GM10248 (cell line): ENCODE measurements at regions of chr10 and their contacts with region 1.

Region 1: GRCh38 chr10:93977442-93977841 is 16.3 kb upstream of the PLCE1 start:
- DNase-seq: no peak
- CTCF ChIP-seq: no peak

Region 2: GRCh38 chr10:93993782-93994437 is 16.5 kb after region 1 on chr10 and contains the start of gene PLCE1:
- CTCF ChIA-PET with region 1: interaction called, 21 read pairs
- POLR2A ChIA-PET with region 1: no interaction called
- DNase-seq: peak; percentile 60
- CTCF ChIP-seq: no peak

Region 3: GRCh38 chr10:94010886-94011285 is 33.4 kb after region 1 on chr10:
- CTCF ChIA-PET with region 1: no interaction called
- POLR2A ChIA-PET with region 1: no interaction called
- DNase-seq: no peak
- CTCF ChIP-seq: no peak